BJ (cell line): ENCODE measurements at regions of chr13 and their contacts with region 1.

Region 1: GRCh38 chr13:21465710-21466160 is 6.6 kb upstream of the ZDHHC20 start:
- DNase-seq: no peak
- H3K4me3 ChIP-seq: no peak overlapping the region
- H3K27me3 ChIP-seq: no peaks in the 10 kb centered on the region
- CTCF ChIP-seq: no peak

Region 2: GRCh38 chr13:21476893-21477472 is 11.2 kb after region 1 on chr13:
- CTCF ChIA-PET with region 1: interaction called, 37 read pairs
- POLR2A ChIA-PET with region 1: no interaction called
- DNase-seq: no peak
- H3K4me3 ChIP-seq: peak overlapping the region; percentile 42
- H3K27me3 ChIP-seq: no peaks in the 10 kb centered on the region
- CTCF ChIP-seq: peak; percentile 99